Esophagus muscularis mucosa (tissue), 4 donors: ENCODE measurements at regions of chr3 and their contacts with region 1.

Region 1: GRCh38 chr3:194344012-194344411 is 7.1 kb downstream of the CPN2 start:
- DNase-seq: peak; percentile 95
- H3K4me3 ChIP-seq: no peak overlapping the region
- H3K27ac ChIP-seq: no peak overlapping the region
- H3K4me1 ChIP-seq: no peaks in the 10 kb centered on the region
- H3K27me3 ChIP-seq: peaks cover 0 to 17% (median 0%) of the 10 kb centered on the region in 4 donors
- CTCF ChIP-seq: peak; percentile 85 to 96 (median 93)
- EP300 ChIP-seq: no peak
- POLR2A ChIP-seq: no peak

Region 2: DNA sequence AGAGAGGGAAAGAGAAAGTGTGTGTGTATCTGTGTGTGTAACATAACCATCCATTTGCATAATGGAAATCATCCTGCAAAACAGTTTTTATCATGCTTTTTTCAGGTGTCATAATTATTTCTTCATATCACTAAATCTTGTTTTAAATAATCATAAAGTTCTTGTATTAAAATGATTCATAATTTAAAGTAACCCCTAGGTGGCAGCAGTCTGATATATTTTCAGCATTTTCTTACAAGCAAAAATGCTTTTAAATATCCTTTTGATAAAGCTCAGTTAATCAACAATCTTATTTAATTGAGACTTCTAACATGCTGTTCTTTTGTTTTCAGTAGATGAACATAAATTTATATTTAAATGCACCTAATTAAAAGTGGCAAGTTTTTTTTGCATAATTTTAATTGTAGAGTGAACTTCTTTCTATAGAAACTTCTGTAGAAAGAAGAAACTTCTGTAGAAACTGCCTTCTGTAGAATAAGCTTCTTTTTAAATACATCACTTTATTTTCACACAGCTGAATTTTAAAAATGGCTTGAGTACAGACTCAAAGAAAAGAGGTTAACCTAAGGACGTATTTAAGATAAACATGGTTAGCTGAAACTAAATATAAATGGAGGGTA is 678.5 kb before region 1 on chr3:
- intact Hi-C with region 1: loop called (anchors 10 kb)
- DNase-seq: no peak
- H3K4me3 ChIP-seq: no peak overlapping the region
- H3K27ac ChIP-seq: no peak overlapping the region
- H3K4me1 ChIP-seq: no peaks in the 10 kb centered on the region
- H3K27me3 ChIP-seq: no peaks in the 10 kb centered on the region
- CTCF ChIP-seq: peak; percentile 24 to 45 (median 31)
- EP300 ChIP-seq: no peak
- POLR2A ChIP-seq: no peak

Region 3: GRCh38 chr3:194250098-194251002 is 93.7 kb before region 1 on chr3:
- intact Hi-C with region 1: no loop called
- DNase-seq: no peak
- H3K4me3 ChIP-seq: peak overlapping the region; percentile 22 to 37 (median 30)
- H3K27ac ChIP-seq: no peak overlapping the region
- H3K4me1 ChIP-seq: peaks cover 21 to 27% (median 25%) of the 10 kb centered on the region in 4 donors
- H3K27me3 ChIP-seq: no peaks in the 10 kb centered on the region
- CTCF ChIP-seq: no peak
- EP300 ChIP-seq: no peak
- POLR2A ChIP-seq: no peak